Panc1 (cell line): ENCODE measurements at regions of chr3 and their contacts with region 1.

Region 1: DNA sequence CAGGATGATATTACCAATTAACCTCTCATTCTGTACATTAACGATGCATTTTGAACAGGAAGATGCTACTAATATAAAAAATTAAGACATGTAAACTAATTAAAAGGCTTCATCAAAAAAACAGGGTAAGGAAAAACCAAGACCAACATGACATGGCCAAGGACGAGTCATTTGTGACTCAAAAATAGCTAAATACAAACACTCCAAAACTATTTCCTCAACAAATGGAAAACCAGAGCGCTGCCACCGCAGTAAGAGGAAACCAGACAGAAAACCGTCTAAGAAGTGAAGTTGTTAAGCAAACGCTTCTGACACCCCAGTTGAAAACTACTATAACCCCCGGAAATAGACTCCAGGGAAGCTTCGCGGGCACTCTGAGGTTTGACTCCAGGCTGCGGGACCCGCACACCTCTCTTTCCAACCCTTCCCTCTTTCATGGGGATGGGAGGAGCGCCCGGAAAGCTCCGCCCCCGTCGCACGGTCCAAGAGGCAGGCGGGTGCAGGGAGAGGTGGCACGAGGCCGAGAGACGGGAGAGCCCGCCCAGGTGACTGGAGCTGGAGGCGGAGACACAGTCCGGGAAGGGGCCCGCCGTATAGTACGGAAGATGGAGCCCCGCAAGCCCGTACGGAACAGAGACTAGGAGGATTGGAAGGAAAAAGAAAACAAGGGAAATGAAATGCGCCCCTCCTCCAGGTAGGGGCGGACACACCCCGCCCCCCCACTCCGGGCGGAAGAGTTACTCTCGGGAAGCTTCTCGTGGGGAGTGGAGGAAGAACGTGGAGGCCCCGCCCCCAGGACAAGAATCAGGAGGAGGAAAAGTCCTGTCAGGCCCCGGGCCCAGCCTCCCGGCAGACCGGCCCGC is 708 bp downstream of the DCAF1 start:
- DNase-seq: peak; percentile 69
- ATAC-seq: peak; percentile 90
- H3K4me3 ChIP-seq: peak overlapping the region; percentile 76 to 84
- H3K27ac ChIP-seq: peak overlapping the region; percentile 61
- H3K4me1 ChIP-seq: 0 out of 2 replicates have a peak, but pooled peaks cover 3% of the 10 kb centered on the region
- H3K27me3 ChIP-seq: no peaks in the 10 kb centered on the region
- CTCF ChIP-seq: no peak

Region 2: GRCh38 chr3:50445919-50446318 is 1053.2 kb before region 1 on chr3:
- CTCF ChIA-PET with region 1: interaction called, 18 read pairs
- POLR2A ChIA-PET with region 1: no interaction called
- in situ Hi-C with region 1: no loop called
- intact Hi-C with region 1: no loop called
- DNase-seq: no peak
- ATAC-seq: peak; percentile 46; the same call in 1 of the 2 replicates
- H3K4me3 ChIP-seq: no peak overlapping the region
- H3K27ac ChIP-seq: no peak overlapping the region
- H3K4me1 ChIP-seq: peaks cover 4% of the 10 kb centered on the region; the same call in 1 of the 2 replicates
- H3K27me3 ChIP-seq: no peaks in the 10 kb centered on the region
- CTCF ChIP-seq: no peak

Region 3: GRCh38 chr3:51519848-51520247 is 20.7 kb after region 1 on chr3:
- CTCF ChIA-PET with region 1: no interaction called
- POLR2A ChIA-PET with region 1: interaction called, 15 read pairs
- in situ Hi-C with region 1: no loop called
- intact Hi-C with region 1: no loop called
- DNase-seq: no peak
- ATAC-seq: 0 out of 2 replicates have a peak, but pooled peaks have one; percentile 30
- H3K4me3 ChIP-seq: no peak overlapping the region
- H3K27ac ChIP-seq: no peak overlapping the region
- H3K4me1 ChIP-seq: no peaks in the 10 kb centered on the region
- H3K27me3 ChIP-seq: no peaks in the 10 kb centered on the region
- CTCF ChIP-seq: no peak

Region 4: GRCh38 chr3:51622868-51623267 is 123.8 kb after region 1 on chr3:
- CTCF ChIA-PET with region 1: no interaction called
- POLR2A ChIA-PET with region 1: no interaction called
- in situ Hi-C with region 1: no loop called
- intact Hi-C with region 1: no loop called
- DNase-seq: no peak
- ATAC-seq: no peak
- H3K4me3 ChIP-seq: no peak overlapping the region
- H3K27ac ChIP-seq: no peak overlapping the region
- H3K4me1 ChIP-seq: no peaks in the 10 kb centered on the region
- H3K27me3 ChIP-seq: no peaks in the 10 kb centered on the region
- CTCF ChIP-seq: no peak

Region 5: DNA sequence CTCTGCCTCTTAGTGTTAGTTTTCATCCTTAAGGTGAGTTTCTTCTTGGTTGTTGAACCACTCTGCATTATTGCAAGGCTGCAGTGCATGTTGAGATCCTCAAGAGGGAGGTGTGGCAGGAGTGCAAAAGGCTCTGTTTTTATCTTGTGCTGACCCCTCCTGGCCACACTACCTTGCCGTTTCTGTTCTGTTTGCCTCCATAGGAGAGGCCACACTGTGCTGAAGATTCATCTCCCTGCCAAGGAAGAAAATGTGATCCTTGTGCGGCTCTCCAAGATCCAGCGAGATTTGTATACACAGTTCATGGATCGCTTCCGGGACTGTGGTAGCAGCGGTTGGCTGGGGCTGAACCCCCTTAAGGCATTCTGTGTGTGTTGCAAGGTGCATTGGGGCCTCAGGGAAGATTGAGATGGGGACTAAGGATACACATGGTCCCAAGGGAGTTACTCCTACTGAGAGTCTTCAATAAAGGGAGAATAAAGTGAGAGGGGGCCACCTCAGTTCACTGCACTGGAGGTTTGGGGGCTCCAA is 138.9 kb after region 1 on chr3:
- CTCF ChIA-PET with region 1: no interaction called
- POLR2A ChIA-PET with region 1: no interaction called
- in situ Hi-C with region 1: no loop called
- intact Hi-C with region 1: loop called (anchors 5 kb)
- DNase-seq: peak; percentile 36
- ATAC-seq: peak; percentile 88
- H3K4me3 ChIP-seq: no peak overlapping the region
- H3K27ac ChIP-seq: no peak overlapping the region
- H3K4me1 ChIP-seq: no peaks in the 10 kb centered on the region
- H3K27me3 ChIP-seq: no peaks in the 10 kb centered on the region
- CTCF ChIP-seq: peak; percentile 79

Region 6: DNA sequence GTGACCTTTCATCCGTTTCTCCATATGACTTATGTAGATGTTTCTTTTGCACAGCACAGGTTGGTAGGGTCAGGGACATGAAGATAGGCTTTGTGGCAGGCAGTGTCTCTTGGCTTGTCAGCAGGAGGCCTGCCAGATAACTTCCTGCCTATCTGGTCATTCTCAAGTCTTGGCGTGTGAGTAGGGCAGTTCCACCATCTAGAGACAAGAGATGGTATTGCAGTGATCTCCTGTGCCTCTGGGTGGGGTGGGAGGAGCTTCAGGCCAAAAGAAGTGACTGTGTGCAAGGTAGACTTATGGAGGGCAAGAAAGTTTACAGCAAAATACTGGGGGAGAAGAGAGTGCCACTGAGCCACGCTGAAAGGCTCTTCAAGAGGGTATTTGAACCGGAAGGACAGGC is 183.0 kb after region 1 on chr3:
- CTCF ChIA-PET with region 1: interaction called, 12 read pairs
- POLR2A ChIA-PET with region 1: no interaction called
- in situ Hi-C with region 1: no loop called
- intact Hi-C with region 1: loop called (anchors 5 kb)
- DNase-seq: peak; percentile 76
- ATAC-seq: peak; percentile 92
- H3K4me3 ChIP-seq: no peak overlapping the region
- H3K27ac ChIP-seq: no peak overlapping the region
- H3K4me1 ChIP-seq: no peaks in the 10 kb centered on the region
- H3K27me3 ChIP-seq: no peaks in the 10 kb centered on the region
- CTCF ChIP-seq: peak; percentile 74; the same call in 1 of the 2 replicates

Region 7: DNA sequence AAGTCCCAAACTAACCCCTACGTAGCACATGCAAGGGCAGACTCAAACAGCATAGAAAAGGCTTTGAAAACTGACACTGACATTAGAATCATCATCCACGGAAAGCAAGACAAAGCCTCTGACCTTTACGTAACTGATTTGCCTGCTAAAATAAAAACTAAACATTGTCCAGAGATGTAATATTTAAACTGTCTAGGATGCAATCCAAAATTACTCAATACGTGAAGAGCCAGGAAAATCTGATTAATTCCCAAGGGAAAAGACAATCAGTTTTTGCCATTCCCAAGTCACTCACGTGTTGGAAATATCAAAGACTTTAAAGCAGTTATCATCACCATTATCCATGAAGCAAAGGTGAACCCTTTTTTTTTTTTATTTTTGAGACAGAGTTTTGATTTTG is 417.3 kb after region 1 on chr3:
- CTCF ChIA-PET with region 1: no interaction called
- POLR2A ChIA-PET with region 1: no interaction called
- in situ Hi-C with region 1: no loop called
- intact Hi-C with region 1: no loop called
- DNase-seq: no peak
- ATAC-seq: no peak
- H3K4me3 ChIP-seq: no peak overlapping the region
- H3K27ac ChIP-seq: no peak overlapping the region
- H3K4me1 ChIP-seq: no peaks in the 10 kb centered on the region
- H3K27me3 ChIP-seq: no peaks in the 10 kb centered on the region
- CTCF ChIP-seq: no peak